KBM-7 (cell line): ENCODE measurements at regions of chr1 and their contacts with region 1.

Region 1: GRCh38 chr1:114234408-114235124 is 80.9 kb upstream of the SYT6 start:
- DNase-seq: peak; percentile 58

Region 2: DNA sequence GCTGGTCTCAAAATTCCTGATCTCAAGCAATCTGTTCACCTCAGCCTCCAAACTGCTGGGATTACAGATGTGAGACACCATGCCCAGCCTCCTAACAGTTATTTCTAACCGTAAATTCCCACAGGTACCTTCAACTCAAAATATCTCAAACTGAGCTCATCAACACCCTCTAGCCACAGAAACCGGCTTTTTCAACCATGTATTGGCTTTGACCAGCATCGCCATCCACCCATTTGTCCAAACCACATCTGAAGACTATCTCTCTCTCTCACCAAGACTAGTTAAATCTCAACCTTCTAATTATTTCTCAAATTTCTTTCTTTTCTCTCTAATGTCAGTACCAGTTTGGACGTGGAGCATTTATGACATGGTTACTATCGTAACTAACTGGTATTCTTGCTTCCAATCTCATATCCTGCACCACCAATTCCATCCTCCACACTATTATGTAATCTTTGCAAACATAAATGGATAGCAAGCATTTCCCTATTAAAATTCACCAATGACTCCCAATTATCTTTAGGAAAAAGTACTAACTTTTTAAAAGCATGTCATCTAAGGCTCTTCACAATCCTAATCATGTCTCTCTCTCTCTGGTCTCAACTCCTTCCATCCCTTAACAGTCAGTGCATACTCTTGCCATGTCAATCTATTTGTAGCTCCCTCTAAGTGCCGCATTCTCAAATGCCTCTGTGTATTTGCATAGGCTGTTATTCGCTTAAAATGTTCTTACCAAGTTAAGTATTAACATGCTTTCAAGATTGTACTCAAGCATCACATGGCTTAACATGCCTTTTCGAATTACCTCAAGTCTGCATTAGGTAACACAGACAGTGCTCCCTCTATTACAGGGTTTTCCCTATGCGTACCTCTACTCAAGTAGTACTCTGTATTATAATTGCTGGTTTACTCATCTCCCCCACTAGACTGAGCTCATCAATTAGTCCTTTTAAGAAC is 440.4 kb before region 1 on chr1:
- in situ Hi-C with region 1: no loop called
- DNase-seq: no peak

Region 3: DNA sequence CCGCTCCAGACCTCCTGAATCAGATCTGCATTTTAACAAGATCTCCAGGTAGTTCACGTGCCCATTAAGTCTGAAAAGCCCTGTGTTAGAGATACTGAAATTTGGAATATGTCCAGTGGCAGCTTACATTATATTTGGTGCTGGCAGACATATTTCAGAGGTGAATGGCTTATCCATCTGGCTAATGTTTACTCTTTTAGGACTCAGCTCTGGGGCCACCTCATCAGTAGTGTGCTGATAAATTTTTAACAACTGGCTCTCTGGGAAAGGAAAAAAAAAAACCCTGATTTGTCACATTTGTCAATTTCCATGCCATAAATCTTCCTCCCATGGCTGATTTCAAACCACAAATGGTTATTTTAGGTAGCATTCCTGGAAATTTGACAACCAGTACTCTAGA is 55.6 kb before region 1 on chr1:
- in situ Hi-C with region 1: loop called (anchors 10 kb)
- DNase-seq: no peak